ENCODE measurements at regions of chr17 and their contacts with region 1.

Region 1: GRCh38 chr17:8383143-8383822 is at the start of gene RPL26:
- DNase-seq: peak; percentile 97
- ATAC-seq: peak; percentile 88
- H3K4me3 ChIP-seq: peak within 1 kb of the TSS; percentile 85 to 98
- H3K27ac ChIP-seq: peak within 1 kb of the TSS; percentile 96
- H3K4me1 ChIP-seq: peaks cover 20 to 44% of the 10 kb centered on the region in 2 experiments
- H3K27me3 ChIP-seq: no peaks in the 10 kb centered on the region
- CTCF ChIP-seq: peak; percentile 62 to 98 (median 96)
- POLR2A ChIP-seq: peak; percentile 86
- RAD21 ChIP-seq: peak; percentile 70
- total RNA-seq, gene RPL26: 2,603 TPM

Region 2: DNA sequence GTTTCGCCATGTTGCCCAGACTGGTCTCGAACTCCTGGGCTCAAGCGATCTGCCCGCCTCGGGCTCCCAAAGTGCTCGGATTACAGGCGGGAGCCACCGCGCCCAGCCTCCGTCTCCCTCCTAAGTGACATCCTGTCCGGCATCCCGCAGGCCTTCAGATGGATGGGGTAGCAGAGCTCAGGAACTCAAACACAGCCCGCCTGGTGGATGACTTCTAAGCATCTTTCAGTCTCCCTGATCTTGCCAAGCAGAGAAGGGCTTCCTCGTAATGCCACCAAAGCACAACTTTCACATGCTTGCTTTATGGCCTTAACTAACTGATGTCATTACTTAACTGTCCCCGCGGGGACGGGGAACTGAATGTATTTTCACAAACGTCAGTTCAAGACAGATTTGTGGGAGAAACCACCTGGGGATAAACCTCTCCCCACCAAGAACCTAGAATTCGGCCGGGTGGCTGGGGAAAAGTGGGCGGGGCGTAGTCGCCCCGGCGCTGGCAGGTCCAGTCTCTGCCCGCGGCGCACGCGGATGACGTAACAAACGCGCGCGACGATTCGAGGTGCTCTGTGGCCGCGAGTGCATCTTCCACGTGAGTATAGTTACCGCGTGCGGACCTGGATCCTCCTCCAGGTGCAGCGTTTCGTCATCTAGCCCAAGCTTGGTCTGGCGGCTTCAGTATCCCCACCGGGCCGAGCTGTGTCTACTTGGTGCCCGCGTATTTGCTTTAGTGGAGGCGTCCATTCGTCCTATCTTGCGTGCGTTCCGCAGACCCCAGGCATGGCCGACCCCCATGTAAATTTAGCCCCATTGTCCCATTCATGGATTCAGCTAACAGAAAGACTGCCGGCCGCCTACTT is 134.3 kb before region 1 on chr17 and contains the start of gene PFAS:
- CTCF ChIA-PET with region 1: interaction called, 3 read pairs
- POLR2A ChIA-PET with region 1: interaction called, 4 read pairs
- RAD21 ChIA-PET with region 1: interaction called in 1 of 2 experiments, 3 read pairs
- intact Hi-C with region 1: loop called (anchors 2 kb)
- DNase-seq: peak; percentile 90
- ATAC-seq: peak; percentile 64
- H3K4me3 ChIP-seq: peak within 1 kb of the TSS; percentile 85 to 99
- H3K27ac ChIP-seq: peak within 1 kb of the TSS; percentile 98
- H3K4me1 ChIP-seq: peaks cover 14 to 26% of the 10 kb centered on the region in 2 experiments
- H3K27me3 ChIP-seq: no peaks in the 10 kb centered on the region
- CTCF ChIP-seq: no peak
- POLR2A ChIP-seq: peak; percentile 89
- RAD21 ChIP-seq: no peak
- total RNA-seq, gene PFAS: 80.6 TPM

Region 3: DNA sequence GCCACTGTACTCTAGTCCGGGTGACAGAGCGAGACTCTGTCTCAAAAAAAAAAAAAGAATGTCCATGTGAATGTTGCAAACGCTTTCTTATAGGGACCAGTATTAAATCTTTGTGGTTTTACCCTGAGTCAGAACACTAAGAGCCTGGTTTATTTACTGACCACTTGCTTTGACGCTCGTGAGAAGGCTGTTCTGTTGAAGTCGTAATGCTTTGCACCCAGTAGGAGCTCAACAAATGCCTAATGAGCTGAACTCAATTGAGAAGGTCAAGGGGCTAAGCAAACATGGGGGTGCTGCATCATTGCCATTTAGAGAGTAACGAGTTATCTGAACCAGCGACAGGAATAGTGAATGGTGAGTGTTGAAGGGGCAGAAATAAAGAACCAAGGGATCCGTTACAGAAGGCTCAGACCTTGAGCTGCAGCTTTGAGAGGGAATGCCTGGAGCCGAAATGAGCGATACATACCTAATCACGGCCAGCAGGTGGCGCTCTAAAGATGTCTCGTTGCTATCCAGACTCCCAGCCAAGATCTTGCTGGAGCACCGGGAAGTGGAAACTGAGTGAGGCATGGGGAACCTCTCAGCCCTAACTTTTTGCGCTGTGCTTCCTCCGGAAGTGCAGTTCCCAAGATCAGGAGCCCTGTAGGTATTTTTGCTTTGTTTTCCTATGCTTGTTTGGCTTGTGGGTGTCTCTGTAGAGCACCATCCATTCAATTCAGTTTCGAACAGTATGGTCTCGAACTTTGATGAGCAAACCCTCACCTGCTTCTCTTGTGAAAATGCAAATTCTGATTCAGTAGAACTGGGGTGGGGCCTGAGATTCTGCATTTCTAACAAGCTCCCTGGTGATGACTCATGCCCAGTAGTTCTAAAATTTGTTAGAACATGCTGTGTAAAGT is 26.9 kb after region 1 on chr17:
- CTCF ChIA-PET with region 1: interaction called, 11 read pairs
- POLR2A ChIA-PET with region 1: interaction called, 12 read pairs
- RAD21 ChIA-PET with region 1: interaction called in 1 of 2 experiments, 4 read pairs
- intact Hi-C with region 1: no loop called
- DNase-seq: peak; percentile 73
- ATAC-seq: peak; percentile 76
- H3K4me3 ChIP-seq: no peak overlapping the region
- H3K27ac ChIP-seq: 0 out of 2 replicates have a peak overlapping the region, but pooled peaks have one; percentile 19
- H3K4me1 ChIP-seq: peaks cover 9 to 41% of the 10 kb centered on the region in 2 experiments
- H3K27me3 ChIP-seq: no peaks in the 10 kb centered on the region
- CTCF ChIP-seq: peak; percentile 62 to 88 (median 85); a peak in 5 of 6 replicates
- POLR2A ChIP-seq: no peak
- RAD21 ChIP-seq: peak; percentile 79

Region 4: DNA sequence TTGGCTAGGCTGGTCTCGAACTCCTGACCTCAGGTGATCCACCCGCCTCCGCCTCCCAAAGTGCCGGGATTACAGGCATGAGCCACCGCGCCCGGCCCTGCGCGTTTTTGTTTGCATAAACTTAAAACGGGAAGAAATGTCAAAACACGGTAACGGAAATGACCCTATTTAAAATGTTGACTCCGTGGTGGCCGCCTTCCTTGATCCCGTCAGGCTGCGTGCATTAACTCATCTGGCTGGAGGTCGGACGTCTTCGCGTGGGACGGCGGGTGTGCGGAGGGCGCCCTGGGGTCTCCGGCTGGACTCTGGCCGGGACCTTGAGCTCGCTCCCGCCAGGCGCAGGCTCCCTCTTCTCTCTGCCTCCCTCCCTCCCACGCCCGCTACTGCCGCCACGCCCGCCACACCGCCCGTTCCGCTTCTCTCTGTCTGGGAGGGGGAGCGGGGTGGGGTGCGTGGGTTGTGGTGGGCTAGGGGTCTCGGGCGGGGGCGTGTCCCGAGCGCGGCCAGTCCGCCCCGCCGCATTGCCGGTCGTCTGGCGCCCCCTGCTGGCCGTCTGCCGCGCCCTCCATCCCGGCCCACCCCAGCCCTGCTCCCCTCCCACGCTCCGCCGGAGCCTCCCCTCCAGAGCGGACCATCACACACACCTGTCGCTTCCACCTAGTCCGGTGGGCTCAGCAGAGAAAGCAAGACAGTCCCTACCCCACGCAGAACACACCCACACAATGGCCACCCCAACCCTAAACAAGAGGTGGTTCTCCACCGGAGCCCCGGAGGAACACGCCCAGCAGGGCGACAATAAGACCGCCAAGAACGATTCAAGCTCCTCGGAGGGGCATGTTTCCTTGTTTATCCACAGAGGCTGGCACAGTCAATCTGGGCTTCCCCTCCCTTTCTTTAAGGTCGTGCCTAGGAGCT is 362.6 kb after region 1 on chr17:
- CTCF ChIA-PET with region 1: interaction called, 45 read pairs
- POLR2A ChIA-PET with region 1: interaction called, 17 read pairs
- RAD21 ChIA-PET with region 1: interaction called, 8 read pairs
- intact Hi-C with region 1: loop called (anchors 1 kb)
- DNase-seq: peak; percentile 16
- ATAC-seq: peak; percentile 97
- H3K4me3 ChIP-seq: peak overlapping the region; percentile 52 to 58
- H3K27ac ChIP-seq: no peak overlapping the region
- H3K4me1 ChIP-seq: peaks cover 0 to 12% of the 10 kb centered on the region in 2 experiments; a peak in 2 of 4 replicates
- H3K27me3 ChIP-seq: no peaks in the 10 kb centered on the region
- CTCF ChIP-seq: peak; percentile 47 to 78 (median 76); a peak in 5 of 6 replicates
- POLR2A ChIP-seq: no peak
- RAD21 ChIP-seq: peak; percentile 89

Region 5: GRCh38 chr17:8894673-8895578 is 511.6 kb after region 1 on chr17:
- CTCF ChIA-PET with region 1: no interaction called
- POLR2A ChIA-PET with region 1: no interaction called
- RAD21 ChIA-PET with region 1: interaction called in 1 of 2 experiments, 3 read pairs
- intact Hi-C with region 1: loop called (anchors 10 kb)
- DNase-seq: peak; percentile 39
- ATAC-seq: peak; percentile 93
- H3K4me3 ChIP-seq: no peak overlapping the region
- H3K27ac ChIP-seq: no peak overlapping the region
- H3K4me1 ChIP-seq: peaks cover 0 to 5% of the 10 kb centered on the region in 2 experiments; a peak in 1 of 4 replicates
- H3K27me3 ChIP-seq: no peaks in the 10 kb centered on the region
- CTCF ChIP-seq: peak; percentile 57 to 80 (median 77); a peak in 5 of 6 replicates
- POLR2A ChIP-seq: no peak
- RAD21 ChIP-seq: peak; percentile 80

Measured in HCT116 (cell line).